Caco-2 (cell line): ENCODE measurements at regions of chr16 and their contacts with region 1.

Region 1: GRCh38 chr16:75550211-75550662 is 5.8 kb downstream of the TMEM231 start:
- DNase-seq: peak in 1 of 2 experiments; percentile 49
- H3K4me3 ChIP-seq: no peak overlapping the region
- H3K4me3 Mint-ChIP-seq: no peak overlapping the region
- H3K27ac Mint-ChIP-seq: no peak overlapping the region
- H3K4me1 ChIP-seq: no peaks in the 10 kb centered on the region
- H3K4me1 Mint-ChIP-seq: no peaks in the 10 kb centered on the region
- H3K27me3 ChIP-seq: no peaks in the 10 kb centered on the region
- H3K27me3 Mint-ChIP-seq: no peaks in the 10 kb centered on the region
- CTCF ChIP-seq: peak in 1 of 2 experiments; percentile 70

Region 2: DNA sequence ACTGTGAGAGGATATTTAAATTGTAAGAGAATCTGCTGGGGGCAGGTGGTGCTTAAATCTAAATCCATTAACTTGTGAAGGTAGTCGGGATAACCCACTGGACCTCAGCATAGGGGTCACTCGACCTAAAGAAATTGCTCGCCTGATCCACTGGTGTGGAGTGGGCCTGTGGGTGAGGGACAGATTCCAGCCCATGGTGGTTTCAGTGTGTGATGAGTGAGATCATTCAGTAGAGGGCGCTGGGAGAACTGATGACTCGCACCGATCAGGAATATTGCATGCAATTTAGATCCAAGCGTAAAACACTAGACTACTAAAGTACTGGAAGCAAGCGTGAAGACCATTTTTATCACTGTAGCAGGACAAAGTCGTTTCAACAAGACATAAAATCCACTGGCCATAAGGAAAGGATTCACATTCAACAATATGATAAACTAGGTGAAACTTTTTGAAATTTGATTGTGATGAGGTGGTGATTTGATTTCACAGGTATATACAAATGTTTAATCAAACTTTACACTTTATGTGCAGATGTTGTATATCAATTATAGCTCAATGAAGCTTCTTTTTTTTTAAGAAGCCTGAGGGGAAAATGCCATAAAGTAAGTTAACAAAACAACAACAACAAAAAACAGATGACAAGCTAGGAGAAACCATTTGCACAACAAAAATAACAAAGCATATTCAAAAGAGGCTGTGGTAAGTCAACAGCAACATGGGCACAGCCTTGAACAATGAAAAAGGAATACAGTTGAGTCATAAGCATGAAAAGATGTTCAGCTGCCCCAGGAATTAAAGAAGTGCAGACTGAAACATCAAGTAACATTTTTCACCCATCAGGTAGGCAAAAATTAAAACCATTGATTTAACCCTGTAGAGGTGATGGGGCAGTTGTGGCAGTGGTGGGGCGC is 78.3 kb before region 1 on chr16:
- CTCF ChIA-PET with region 1: interaction called, 4 read pairs
- POLR2A ChIA-PET with region 1: no interaction called
- intact Hi-C with region 1: loop called (anchors 1 kb)
- DNase-seq: peak in 1 of 2 experiments; percentile 68
- H3K4me3 ChIP-seq: no peak overlapping the region
- H3K4me3 Mint-ChIP-seq: no peak overlapping the region
- H3K27ac Mint-ChIP-seq: no peak overlapping the region
- H3K4me1 ChIP-seq: no peaks in the 10 kb centered on the region
- H3K4me1 Mint-ChIP-seq: no peaks in the 10 kb centered on the region
- H3K27me3 ChIP-seq: no peaks in the 10 kb centered on the region
- H3K27me3 Mint-ChIP-seq: peaks cover 3% of the 10 kb centered on the region
- CTCF ChIP-seq: peak; percentile 77 to 83

Region 3: DNA sequence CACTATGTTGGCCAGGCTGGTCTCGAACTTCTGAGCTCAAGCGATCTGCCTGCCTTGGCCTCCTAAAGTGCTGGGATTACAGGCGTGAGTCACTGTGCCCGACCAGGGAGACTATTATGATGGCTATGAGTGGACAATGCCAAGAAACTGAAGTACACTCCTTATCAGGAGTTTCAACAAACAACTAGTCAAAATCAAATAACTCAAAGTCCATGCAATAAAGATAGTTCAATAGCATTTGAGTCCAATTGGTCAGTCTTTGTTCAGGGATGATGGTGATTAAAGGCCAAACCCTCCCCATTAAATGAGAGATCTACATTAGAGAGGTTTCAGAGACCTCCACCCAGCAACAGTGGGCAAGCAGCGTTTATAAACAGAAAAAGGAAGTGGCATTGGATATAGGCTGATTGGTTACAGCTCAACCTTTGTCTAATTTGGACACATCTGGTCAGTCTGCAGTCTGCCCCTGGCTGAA is 22.4 kb before region 1 on chr16:
- CTCF ChIA-PET with region 1: no interaction called
- POLR2A ChIA-PET with region 1: no interaction called
- intact Hi-C with region 1: loop called (anchors 1 kb)
- DNase-seq: peak; percentile 74 to 83
- H3K4me3 ChIP-seq: no peak overlapping the region
- H3K4me3 Mint-ChIP-seq: no peak overlapping the region
- H3K27ac Mint-ChIP-seq: peak overlapping the region; percentile 84
- H3K4me1 ChIP-seq: peaks cover 9% of the 10 kb centered on the region
- H3K4me1 Mint-ChIP-seq: peaks cover 7% of the 10 kb centered on the region
- H3K27me3 ChIP-seq: no peaks in the 10 kb centered on the region
- H3K27me3 Mint-ChIP-seq: no peaks in the 10 kb centered on the region
- CTCF ChIP-seq: no peak